CD8-positive, alpha-beta memory T cell (primary cell): ENCODE measurements at regions of chr22 and their contacts with region 1.

Region 1: DNA sequence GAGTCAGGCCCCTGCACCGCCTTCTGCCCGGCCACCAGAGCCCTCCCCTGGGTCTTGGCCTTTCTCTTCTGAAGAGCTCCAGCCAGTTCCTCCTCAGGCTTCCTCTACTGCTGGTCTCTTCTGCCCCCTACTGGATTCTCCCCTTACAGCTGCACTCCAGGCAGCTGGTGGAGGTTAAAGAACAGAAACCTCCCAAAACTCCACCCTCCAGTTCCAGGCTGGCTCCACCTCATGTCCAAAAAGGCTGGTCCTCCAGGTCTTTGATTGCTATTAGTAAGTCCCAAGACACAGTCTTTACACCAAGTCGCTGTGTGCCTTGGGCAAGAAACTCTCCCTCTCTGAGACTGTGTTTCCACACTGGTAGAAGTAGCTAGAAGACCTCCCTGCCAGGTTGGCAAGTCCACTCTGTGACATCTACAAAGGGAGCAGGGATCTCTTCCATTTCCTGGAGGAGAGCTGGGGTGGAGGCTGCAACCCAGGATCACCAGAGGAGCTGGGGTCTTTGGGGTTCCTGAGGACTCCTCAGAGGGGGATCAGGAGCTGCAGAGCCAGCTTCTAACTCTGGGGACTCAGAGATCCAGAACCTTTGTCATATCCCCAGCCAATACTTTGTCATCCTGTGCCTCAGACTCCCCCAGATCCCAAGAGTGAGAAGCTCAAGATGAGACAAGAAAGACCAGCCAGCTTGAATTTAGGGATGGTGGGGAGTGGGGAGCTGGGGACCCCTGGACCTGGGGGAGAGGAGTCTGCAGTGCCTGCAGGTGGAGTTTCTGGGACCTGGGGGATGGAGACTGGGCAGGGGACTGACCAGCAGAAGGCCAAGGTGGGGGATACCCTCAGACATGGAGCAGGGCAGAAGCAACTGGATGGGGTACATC is 3.4 kb upstream of the IGLL5 start:
- DNase-seq: peak; percentile 44 to 81 (median 70)
- H3K4me3 ChIP-seq: no peak overlapping the region
- H3K4me3 Mint-ChIP-seq: no peak overlapping the region
- H3K27ac ChIP-seq: no peak overlapping the region
- H3K27ac Mint-ChIP-seq: peak overlapping the region in 4 of 8 donors; percentile 4 to 77 (median 40)
- H3K4me1 ChIP-seq: no peaks in the 10 kb centered on the region
- H3K4me1 Mint-ChIP-seq: peaks cover 8 to 14% (median 13%) of the 10 kb centered on the region in 3 donors
- H3K27me3 ChIP-seq: no peaks in the 10 kb centered on the region
- H3K27me3 Mint-ChIP-seq: peaks cover 2 to 6% of the 10 kb centered on the region in 2 donors

Region 2: GRCh38 chr22:22587577-22588188 is 296.6 kb before region 1 on chr22:
- CTCF ChIA-PET with region 1: interaction called, 25 read pairs
- POLR2A ChIA-PET with region 1: no interaction called
- DNase-seq: no peak
- H3K4me3 ChIP-seq: no peak overlapping the region
- H3K4me3 Mint-ChIP-seq: no peak overlapping the region
- H3K27ac ChIP-seq: no peak overlapping the region
- H3K27ac Mint-ChIP-seq: no peak overlapping the region
- H3K4me1 ChIP-seq: no peaks in the 10 kb centered on the region
- H3K4me1 Mint-ChIP-seq: peaks cover 0 to 4% (median 0%) of the 10 kb centered on the region in 3 donors
- H3K27me3 ChIP-seq: peaks cover 3% of the 10 kb centered on the region
- H3K27me3 Mint-ChIP-seq: peaks cover 22 to 37% of the 10 kb centered on the region in 2 donors

Region 3: DNA sequence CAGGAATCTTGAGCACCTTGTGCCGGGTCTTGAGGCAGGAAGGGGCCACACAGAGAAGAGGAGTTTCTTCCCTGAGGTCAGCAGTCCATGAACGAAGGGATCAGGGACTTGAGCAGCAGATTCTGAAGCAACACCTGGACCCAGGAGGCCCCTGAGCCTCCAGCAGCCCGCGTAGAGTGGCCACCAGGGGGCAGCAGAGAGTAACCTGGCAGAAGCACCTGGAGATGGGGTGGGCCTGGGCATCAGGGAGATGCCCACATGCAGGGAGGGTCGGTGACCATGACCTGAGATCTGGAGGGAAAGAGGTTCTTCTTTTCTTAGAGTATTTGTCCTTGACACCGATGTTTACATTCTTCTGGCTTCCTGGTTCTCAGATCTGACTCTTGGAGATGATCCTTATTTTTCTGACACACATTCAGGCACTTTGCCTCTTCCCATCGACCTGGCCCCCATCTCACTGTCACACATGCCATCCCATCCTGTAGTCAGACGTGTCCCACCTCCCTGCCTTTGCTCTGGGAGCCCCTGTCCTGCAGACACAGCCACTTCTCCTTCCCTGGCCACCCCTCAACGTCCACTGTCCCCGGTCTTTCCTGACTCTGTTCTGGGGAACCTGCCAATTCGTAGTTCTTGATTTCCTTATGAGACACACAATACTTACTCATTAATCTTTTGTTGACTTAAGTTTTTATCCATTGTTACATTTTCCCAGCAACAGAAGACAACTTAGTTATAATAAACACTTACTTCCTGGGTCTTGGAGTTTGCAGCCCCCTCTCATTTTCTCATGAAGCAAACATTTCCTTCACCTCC is 173.3 kb before region 1 on chr22:
- CTCF ChIA-PET with region 1: interaction called, 47 read pairs
- POLR2A ChIA-PET with region 1: no interaction called
- DNase-seq: peak; percentile 54 to 85 (median 71)
- H3K4me3 ChIP-seq: no peak overlapping the region
- H3K4me3 Mint-ChIP-seq: no peak overlapping the region
- H3K27ac ChIP-seq: no peak overlapping the region
- H3K27ac Mint-ChIP-seq: peak overlapping the region in 2 of 8 donors; percentile 35 to 62
- H3K4me1 ChIP-seq: no peaks in the 10 kb centered on the region
- H3K4me1 Mint-ChIP-seq: peaks cover 4 to 14% (median 8%) of the 10 kb centered on the region in 3 donors
- H3K27me3 ChIP-seq: no peaks in the 10 kb centered on the region
- H3K27me3 Mint-ChIP-seq: peaks cover 0 to 3% of the 10 kb centered on the region in 2 donors

Region 4: DNA sequence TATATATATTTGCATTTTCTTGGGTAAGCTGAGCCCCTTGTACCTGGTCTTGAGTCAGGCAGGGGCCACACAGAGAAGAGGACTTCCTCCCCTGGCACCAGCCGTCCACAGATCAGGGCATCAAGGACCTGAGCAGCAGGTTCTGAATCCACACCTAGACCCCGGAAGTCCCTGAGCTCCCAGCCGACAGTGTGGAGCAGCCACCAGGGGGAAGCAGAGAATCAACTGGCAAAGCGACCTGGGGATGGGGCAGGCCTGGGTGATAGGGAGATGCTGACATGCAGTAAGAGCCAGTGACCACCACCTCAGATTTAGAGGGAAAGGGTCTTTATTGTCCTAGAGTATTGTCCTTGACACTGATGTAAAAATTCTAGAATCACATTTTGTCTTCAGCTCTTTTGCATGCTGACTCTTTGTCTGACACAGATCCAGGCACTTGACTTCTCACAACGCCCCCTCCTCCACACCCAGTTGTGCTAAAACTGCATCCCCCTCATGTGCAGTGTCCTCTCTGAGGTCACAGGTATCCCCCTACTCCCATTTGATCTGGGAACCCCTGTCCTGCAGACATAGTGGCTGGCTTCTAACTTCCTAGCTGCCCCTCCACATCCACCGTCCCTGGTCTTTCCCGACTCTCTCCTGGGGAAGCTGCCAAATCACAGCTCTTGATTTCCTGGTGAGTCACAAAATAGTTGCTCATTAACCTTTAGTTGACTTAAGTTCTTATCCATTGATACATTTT is 130.6 kb before region 1 on chr22:
- CTCF ChIA-PET with region 1: interaction called, 117 read pairs
- POLR2A ChIA-PET with region 1: interaction called, 7 read pairs
- DNase-seq: peak; percentile 69 to 88 (median 75)
- H3K4me3 ChIP-seq: no peak overlapping the region
- H3K4me3 Mint-ChIP-seq: peak overlapping the region; percentile 38 to 87 (median 71)
- H3K27ac ChIP-seq: no peak overlapping the region
- H3K27ac Mint-ChIP-seq: peak overlapping the region; percentile 67 to 98 (median 92)
- H3K4me1 ChIP-seq: peaks cover 50% of the 10 kb centered on the region
- H3K4me1 Mint-ChIP-seq: peaks cover 74 to 82% (median 80%) of the 10 kb centered on the region in 3 donors
- H3K27me3 ChIP-seq: no peaks in the 10 kb centered on the region
- H3K27me3 Mint-ChIP-seq: no peaks in the 10 kb centered on the region

Region 5: GRCh38 chr22:22810018-22810427 is 74.2 kb before region 1 on chr22:
- CTCF ChIA-PET with region 1: interaction called, 247 read pairs
- POLR2A ChIA-PET with region 1: no interaction called
- DNase-seq: peak; percentile 58 to 88 (median 74)
- H3K4me3 ChIP-seq: no peak overlapping the region
- H3K4me3 Mint-ChIP-seq: peak overlapping the region in 6 of 7 donors; percentile 60 to 87 (median 82)
- H3K27ac ChIP-seq: no peak overlapping the region
- H3K27ac Mint-ChIP-seq: peak overlapping the region; percentile 82 to 97 (median 88)
- H3K4me1 ChIP-seq: peaks cover 18% of the 10 kb centered on the region
- H3K4me1 Mint-ChIP-seq: peaks cover 86 to 94% (median 92%) of the 10 kb centered on the region in 3 donors
- H3K27me3 ChIP-seq: no peaks in the 10 kb centered on the region
- H3K27me3 Mint-ChIP-seq: no peaks in the 10 kb centered on the region

Region 6: GRCh38 chr22:22870577-22871404 is 13.5 kb before region 1 on chr22:
- CTCF ChIA-PET with region 1: interaction called, 12 read pairs
- POLR2A ChIA-PET with region 1: no interaction called
- DNase-seq: no peak
- H3K4me3 ChIP-seq: no peak overlapping the region
- H3K4me3 Mint-ChIP-seq: no peak overlapping the region
- H3K27ac ChIP-seq: no peak overlapping the region
- H3K27ac Mint-ChIP-seq: peak overlapping the region in 3 of 8 donors; percentile 37 to 83 (median 38)
- H3K4me1 ChIP-seq: peaks cover 9% of the 10 kb centered on the region
- H3K4me1 Mint-ChIP-seq: peaks cover 28 to 39% (median 29%) of the 10 kb centered on the region in 3 donors
- H3K27me3 ChIP-seq: no peaks in the 10 kb centered on the region
- H3K27me3 Mint-ChIP-seq: peaks cover 0 to 4% of the 10 kb centered on the region in 2 donors

Region 7: GRCh38 chr22:22995166-22995565 is 110.9 kb after region 1 on chr22:
- CTCF ChIA-PET with region 1: no interaction called
- POLR2A ChIA-PET with region 1: no interaction called
- DNase-seq: no peak
- H3K4me3 ChIP-seq: no peak overlapping the region
- H3K4me3 Mint-ChIP-seq: no peak overlapping the region
- H3K27ac ChIP-seq: no peak overlapping the region
- H3K27ac Mint-ChIP-seq: no peak overlapping the region
- H3K4me1 ChIP-seq: no peaks in the 10 kb centered on the region
- H3K4me1 Mint-ChIP-seq: no peaks in the 10 kb centered on the region
- H3K27me3 ChIP-seq: no peaks in the 10 kb centered on the region
- H3K27me3 Mint-ChIP-seq: peaks cover 11 to 59% of the 10 kb centered on the region in 2 donors